Transverse colon (tissue), 4 donors: ENCODE measurements at regions of chr1 and their contacts with region 1.

Region 1: DNA sequence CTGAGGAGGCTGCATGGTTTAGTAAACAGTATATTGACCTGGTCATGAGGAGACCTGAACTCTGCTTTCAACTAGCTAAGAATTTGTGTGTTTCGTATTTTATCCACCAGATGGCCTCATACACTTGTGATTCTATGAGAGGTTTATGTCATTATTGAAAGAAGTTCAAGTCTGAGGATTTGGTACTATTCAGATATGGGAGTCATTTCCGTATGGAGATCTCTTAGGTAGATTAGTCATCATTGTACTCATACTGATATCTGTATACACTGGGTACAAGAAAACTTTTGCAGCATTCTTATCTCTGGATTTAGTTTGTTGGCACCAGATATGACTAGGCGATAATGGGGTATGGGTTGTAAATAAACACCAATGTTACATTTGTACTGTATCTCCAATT is 26.6 kb downstream of the ATF6 start:
- DNase-seq: no peak
- H3K4me3 ChIP-seq: no peak overlapping the region
- H3K27ac ChIP-seq: peak overlapping the region in 1 of 4 donors; percentile 35
- H3K4me1 ChIP-seq: no peaks in the 10 kb centered on the region
- H3K27me3 ChIP-seq: no peaks in the 10 kb centered on the region
- CTCF ChIP-seq: peak; percentile 48 to 64 (median 50)
- EP300 ChIP-seq: no peak
- POLR2A ChIP-seq: no peak

Region 2: DNA sequence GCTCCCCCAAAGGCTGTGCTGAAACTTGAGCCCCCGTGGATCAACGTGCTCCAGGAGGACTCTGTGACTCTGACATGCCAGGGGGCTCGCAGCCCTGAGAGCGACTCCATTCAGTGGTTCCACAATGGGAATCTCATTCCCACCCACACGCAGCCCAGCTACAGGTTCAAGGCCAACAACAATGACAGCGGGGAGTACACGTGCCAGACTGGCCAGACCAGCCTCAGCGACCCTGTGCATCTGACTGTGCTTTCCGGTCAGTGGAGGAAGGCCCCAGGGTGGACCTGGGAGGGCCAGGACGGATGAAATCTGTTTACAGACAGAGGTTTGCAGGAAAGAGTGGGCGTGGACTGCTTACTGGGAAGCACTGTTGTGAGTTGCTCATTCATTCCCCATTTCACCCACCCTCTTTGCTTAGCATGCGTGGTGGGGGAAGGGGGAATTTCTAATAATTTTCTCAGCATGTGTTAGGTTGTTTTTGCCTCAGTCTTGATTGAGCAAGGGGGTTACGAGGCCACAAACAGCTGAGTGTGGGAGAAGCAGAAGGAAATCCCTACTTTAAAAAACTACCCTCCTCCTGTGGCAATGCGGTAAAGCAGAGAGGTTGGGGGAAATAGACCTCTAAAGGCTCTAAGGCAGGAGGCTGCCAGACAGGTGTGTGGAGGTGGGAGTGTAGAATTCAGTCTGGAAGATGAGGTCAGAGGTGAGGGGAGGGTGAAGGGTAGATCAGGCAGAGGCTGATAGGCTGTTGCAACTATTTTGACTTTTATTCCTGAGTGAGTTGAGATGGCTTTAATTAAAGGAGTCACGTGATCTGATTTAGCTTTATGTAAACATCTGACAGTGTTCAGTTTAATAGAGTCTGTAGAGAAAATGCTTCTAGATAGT is 286.2 kb before region 1 on chr1:
- in situ Hi-C with region 1: no loop called
- intact Hi-C with region 1: no loop called
- DNase-seq: no peak
- H3K4me3 ChIP-seq: peak overlapping the region in 1 of 4 donors; percentile 18
- H3K27ac ChIP-seq: peak overlapping the region in 2 of 4 donors; percentile 25 to 37
- H3K4me1 ChIP-seq: peaks cover 0 to 6% (median 2%) of the 10 kb centered on the region in 4 donors
- H3K27me3 ChIP-seq: no peaks in the 10 kb centered on the region
- CTCF ChIP-seq: no peak
- EP300 ChIP-seq: no peak
- POLR2A ChIP-seq: no peak

Region 3: GRCh38 chr1:161766102-161766981 is 26.4 kb before region 1 on chr1 and contains the start of gene ATF6:
- in situ Hi-C with region 1: no loop called
- intact Hi-C with region 1: no loop called
- DNase-seq: peak; percentile 91
- H3K4me3 ChIP-seq: peak within 1 kb of the TSS; percentile 79 to 85 (median 80)
- H3K27ac ChIP-seq: peak within 1 kb of the TSS; percentile 82 to 94 (median 84)
- H3K4me1 ChIP-seq: peaks cover 11 to 28% (median 16%) of the 10 kb centered on the region in 4 donors
- H3K27me3 ChIP-seq: no peaks in the 10 kb centered on the region
- CTCF ChIP-seq: no peak
- EP300 ChIP-seq: peak; percentile 62
- POLR2A ChIP-seq: peak; percentile 79
- total RNA-seq, gene ATF6: 10.8 to 45.8 (median 23.0) TPM

Region 4: GRCh38 chr1:161848676-161849075 is 55.9 kb after region 1 on chr1:
- in situ Hi-C with region 1: no loop called
- intact Hi-C with region 1: no loop called
- DNase-seq: no peak
- H3K4me3 ChIP-seq: no peak overlapping the region
- H3K27ac ChIP-seq: no peak overlapping the region
- H3K4me1 ChIP-seq: no peaks in the 10 kb centered on the region
- H3K27me3 ChIP-seq: no peaks in the 10 kb centered on the region
- CTCF ChIP-seq: no peak
- EP300 ChIP-seq: no peak
- POLR2A ChIP-seq: no peak

Region 5: GRCh38 chr1:162023547-162024501 is 231.1 kb after region 1 on chr1 and contains the start of gene OLFML2B:
- in situ Hi-C with region 1: loop called in 2 of 4 experiments (anchors 10 to 25 kb)
- intact Hi-C with region 1: no loop called
- DNase-seq: peak; percentile 60
- H3K4me3 ChIP-seq: peak within 1 kb of the TSS; percentile 37 to 64 (median 54)
- H3K27ac ChIP-seq: peak within 1 kb of the TSS; percentile 30 to 84 (median 68)
- H3K4me1 ChIP-seq: peaks cover 3 to 20% (median 14%) of the 10 kb centered on the region in 4 donors
- H3K27me3 ChIP-seq: peaks cover 21% of the 10 kb centered on the region
- CTCF ChIP-seq: no peak
- EP300 ChIP-seq: no peak
- POLR2A ChIP-seq: peak; percentile 25
- total RNA-seq, gene OLFML2B: 1.6 to 5.2 (median 3.7) TPM

Region 6: DNA sequence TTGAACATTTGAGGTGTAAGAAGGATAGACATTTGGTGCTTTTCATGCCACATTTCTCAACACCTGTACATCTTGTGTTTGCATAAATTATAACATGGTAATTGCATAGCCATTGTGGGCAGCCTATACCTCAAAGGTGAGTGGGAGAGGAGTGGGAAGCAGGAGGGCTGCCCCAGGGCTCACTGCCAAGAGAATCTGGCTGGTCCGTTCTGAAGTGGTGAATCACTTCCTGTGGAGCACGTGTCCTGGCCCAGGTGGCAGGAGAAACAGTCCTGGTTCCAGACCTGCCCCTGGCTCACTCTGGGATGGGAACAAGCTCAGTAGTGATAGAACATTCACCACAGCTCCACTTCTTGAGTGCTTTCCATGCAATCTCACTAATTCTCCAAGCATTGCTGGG is 242.5 kb after region 1 on chr1:
- in situ Hi-C with region 1: loop called in 2 of 4 experiments (anchors 10 to 25 kb)
- intact Hi-C with region 1: loop called (anchors 5 kb)
- DNase-seq: no peak
- H3K4me3 ChIP-seq: no peak overlapping the region
- H3K27ac ChIP-seq: no peak overlapping the region
- H3K4me1 ChIP-seq: no peaks in the 10 kb centered on the region
- H3K27me3 ChIP-seq: peaks cover 8% of the 10 kb centered on the region
- CTCF ChIP-seq: no peak
- EP300 ChIP-seq: no peak
- POLR2A ChIP-seq: no peak

Region 7: GRCh38 chr1:162040681-162041080 is 247.9 kb after region 1 on chr1:
- in situ Hi-C with region 1: loop called in 2 of 4 experiments (anchors 10 to 25 kb)
- intact Hi-C with region 1: loop called (anchors 5 kb)
- DNase-seq: no peak
- H3K4me3 ChIP-seq: no peak overlapping the region
- H3K27ac ChIP-seq: no peak overlapping the region
- H3K4me1 ChIP-seq: no peaks in the 10 kb centered on the region
- H3K27me3 ChIP-seq: no peaks in the 10 kb centered on the region
- CTCF ChIP-seq: peak in 1 of 5 experiments; percentile 21
- EP300 ChIP-seq: no peak
- POLR2A ChIP-seq: no peak

Region 8: DNA sequence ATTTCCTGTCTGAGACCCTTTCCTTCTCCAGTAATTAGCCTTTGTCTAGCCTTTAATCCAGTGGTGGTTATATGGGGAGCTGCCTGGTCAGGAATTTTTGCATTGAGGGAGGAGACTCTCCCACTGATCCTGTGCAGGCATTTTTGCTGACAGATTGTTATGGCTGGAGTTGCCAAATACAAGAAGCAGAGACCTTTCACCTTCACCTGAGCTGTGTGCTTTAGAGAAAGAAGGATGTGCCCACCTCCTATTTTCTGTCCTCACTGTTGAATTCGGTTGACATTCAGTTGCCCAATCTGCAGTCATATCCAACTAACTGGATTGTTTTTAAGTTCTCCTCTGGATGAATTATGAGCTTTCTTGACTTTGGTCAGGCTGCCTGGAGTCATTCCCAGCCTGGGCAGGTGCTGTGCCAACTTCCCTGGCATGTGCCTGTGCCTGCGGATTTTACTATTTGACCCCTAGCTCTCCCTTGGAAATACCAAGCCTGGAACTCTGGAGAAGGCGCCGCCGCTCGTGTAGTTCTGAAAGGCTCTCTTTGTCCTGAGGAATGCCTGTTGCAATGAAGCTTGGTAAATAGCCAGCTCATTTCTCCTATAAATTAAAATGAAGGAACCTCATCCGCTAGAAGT is 420.7 kb after region 1 on chr1:
- in situ Hi-C with region 1: no loop called
- intact Hi-C with region 1: no loop called
- DNase-seq: peak; percentile 70
- H3K4me3 ChIP-seq: no peak overlapping the region
- H3K27ac ChIP-seq: peak overlapping the region; percentile 56 to 85 (median 67)
- H3K4me1 ChIP-seq: peaks cover 18 to 56% (median 34%) of the 10 kb centered on the region in 4 donors
- H3K27me3 ChIP-seq: no peaks in the 10 kb centered on the region
- CTCF ChIP-seq: no peak
- EP300 ChIP-seq: no peak
- POLR2A ChIP-seq: no peak

Region 9: GRCh38 chr1:162391790-162392563 is 599.2 kb after region 1 on chr1:
- in situ Hi-C with region 1: loop called in 1 of 4 experiments (anchors 25 kb)
- intact Hi-C with region 1: no loop called
- DNase-seq: no peak
- H3K4me3 ChIP-seq: no peak overlapping the region
- H3K27ac ChIP-seq: no peak overlapping the region
- H3K4me1 ChIP-seq: peaks cover 3 to 21% (median 5%) of the 10 kb centered on the region in 4 donors
- H3K27me3 ChIP-seq: peaks cover 8% of the 10 kb centered on the region
- CTCF ChIP-seq: peak; percentile 80 to 95 (median 83)
- EP300 ChIP-seq: no peak
- POLR2A ChIP-seq: no peak